Esophagus muscularis mucosa (tissue), 4 donors: ENCODE measurements at regions of chr10 and their contacts with region 1.

Region 1: GRCh38 chr10:89563861-89564478 is 28.6 kb upstream of the SLC16A12 start:
- DNase-seq: no peak
- H3K4me3 ChIP-seq: no peak overlapping the region
- H3K27ac ChIP-seq: no peak overlapping the region
- H3K4me1 ChIP-seq: no peaks in the 10 kb centered on the region
- H3K27me3 ChIP-seq: peaks cover 0 to 8% (median 0%) of the 10 kb centered on the region in 4 donors
- CTCF ChIP-seq: peak; percentile 76 to 80 (median 78)
- EP300 ChIP-seq: no peak
- POLR2A ChIP-seq: no peak

Region 2: GRCh38 chr10:89256340-89256739 is 307.6 kb before region 1 on chr10:
- intact Hi-C with region 1: loop called (anchors 5 kb)
- DNase-seq: no peak
- H3K4me3 ChIP-seq: no peak overlapping the region
- H3K27ac ChIP-seq: peak overlapping the region; percentile 5 to 51 (median 18)
- H3K4me1 ChIP-seq: peaks cover 3 to 32% (median 28%) of the 10 kb centered on the region in 4 donors
- H3K27me3 ChIP-seq: no peaks in the 10 kb centered on the region
- CTCF ChIP-seq: no peak
- EP300 ChIP-seq: no peak
- POLR2A ChIP-seq: no peak

Region 3: GRCh38 chr10:89426230-89426868 is 137.6 kb before region 1 on chr10:
- intact Hi-C with region 1: loop called (anchors 1 kb)
- DNase-seq: no peak
- H3K4me3 ChIP-seq: no peak overlapping the region
- H3K27ac ChIP-seq: no peak overlapping the region
- H3K4me1 ChIP-seq: peaks cover 4 to 17% (median 10%) of the 10 kb centered on the region in 4 donors
- H3K27me3 ChIP-seq: no peaks in the 10 kb centered on the region
- CTCF ChIP-seq: peak; percentile 85 to 90 (median 86)
- EP300 ChIP-seq: no peak
- POLR2A ChIP-seq: no peak

Region 4: GRCh38 chr10:89454561-89455347 is 109.2 kb before region 1 on chr10:
- intact Hi-C with region 1: no loop called
- DNase-seq: no peak
- H3K4me3 ChIP-seq: no peak overlapping the region
- H3K27ac ChIP-seq: no peak overlapping the region
- H3K4me1 ChIP-seq: peaks cover 0 to 14% (median 7%) of the 10 kb centered on the region in 4 donors
- H3K27me3 ChIP-seq: no peaks in the 10 kb centered on the region
- CTCF ChIP-seq: no peak
- EP300 ChIP-seq: no peak
- POLR2A ChIP-seq: no peak

Region 5: DNA sequence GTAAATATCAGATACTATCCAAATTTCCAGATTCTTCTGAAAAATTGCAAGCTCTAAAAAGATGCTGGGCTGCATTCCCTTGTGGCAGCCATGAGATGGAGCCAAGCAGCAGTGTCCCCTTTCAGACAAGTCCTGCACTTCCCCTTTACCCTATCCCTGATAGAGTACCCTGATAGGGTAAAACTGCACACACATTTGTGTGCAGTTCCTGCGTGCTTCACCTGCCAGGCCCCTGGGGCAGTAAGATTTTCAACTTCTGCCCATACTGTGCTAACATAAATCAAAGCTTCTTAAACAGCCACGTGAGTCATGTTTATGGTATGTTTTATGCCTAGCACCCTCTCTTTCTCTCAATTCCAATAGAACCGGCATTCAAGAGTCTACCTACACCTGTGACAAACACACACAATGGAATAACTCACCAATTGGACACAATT is 97.4 kb before region 1 on chr10:
- intact Hi-C with region 1: loop called (anchors 5 kb)
- DNase-seq: no peak
- H3K4me3 ChIP-seq: no peak overlapping the region
- H3K27ac ChIP-seq: no peak overlapping the region
- H3K4me1 ChIP-seq: peaks cover 0 to 25% (median 11%) of the 10 kb centered on the region in 4 donors
- H3K27me3 ChIP-seq: no peaks in the 10 kb centered on the region
- CTCF ChIP-seq: peak; percentile 35 to 54 (median 37)
- EP300 ChIP-seq: no peak
- POLR2A ChIP-seq: no peak

Region 6: GRCh38 chr10:89750441-89750840 is 186.5 kb after region 1 on chr10:
- intact Hi-C with region 1: no loop called
- DNase-seq: no peak
- H3K4me3 ChIP-seq: no peak overlapping the region
- H3K27ac ChIP-seq: no peak overlapping the region
- H3K4me1 ChIP-seq: no peaks in the 10 kb centered on the region
- H3K27me3 ChIP-seq: no peaks in the 10 kb centered on the region
- CTCF ChIP-seq: no peak
- EP300 ChIP-seq: no peak
- POLR2A ChIP-seq: no peak